T-cell (primary cell): ENCODE measurements at regions of chr9 and their contacts with region 1.

Region 1: GRCh38 chr9:88766778-88767503 is 224.3 kb upstream of the S1PR3 start:
- DNase-seq: no peak
- ATAC-seq: no peak
- H3K4me3 ChIP-seq: no peak overlapping the region
- H3K4me3 Mint-ChIP-seq: no peak overlapping the region
- H3K27ac ChIP-seq: no peak overlapping the region
- H3K27ac Mint-ChIP-seq: no peak overlapping the region
- H3K4me1 ChIP-seq: no peaks in the 10 kb centered on the region
- H3K4me1 Mint-ChIP-seq: no peaks in the 10 kb centered on the region
- H3K27me3 ChIP-seq: no peaks in the 10 kb centered on the region
- H3K27me3 Mint-ChIP-seq: peaks cover 2 to 6% of the 10 kb centered on the region in 2 donors

Region 2: GRCh38 chr9:88694625-88695024 is 72.3 kb before region 1 on chr9:
- CTCF ChIA-PET with region 1: no interaction called
- POLR2A ChIA-PET with region 1: no interaction called
- DNase-seq: no peak
- ATAC-seq: no peak
- H3K4me3 ChIP-seq: no peak overlapping the region
- H3K4me3 Mint-ChIP-seq: no peak overlapping the region
- H3K27ac ChIP-seq: no peak overlapping the region
- H3K27ac Mint-ChIP-seq: no peak overlapping the region
- H3K4me1 ChIP-seq: no peaks in the 10 kb centered on the region
- H3K4me1 Mint-ChIP-seq: no peaks in the 10 kb centered on the region
- H3K27me3 ChIP-seq: peaks cover 0 to 14% of the 10 kb centered on the region in 2 experiments
- H3K27me3 Mint-ChIP-seq: peaks cover 14 to 28% of the 10 kb centered on the region in 2 donors

Region 3: DNA sequence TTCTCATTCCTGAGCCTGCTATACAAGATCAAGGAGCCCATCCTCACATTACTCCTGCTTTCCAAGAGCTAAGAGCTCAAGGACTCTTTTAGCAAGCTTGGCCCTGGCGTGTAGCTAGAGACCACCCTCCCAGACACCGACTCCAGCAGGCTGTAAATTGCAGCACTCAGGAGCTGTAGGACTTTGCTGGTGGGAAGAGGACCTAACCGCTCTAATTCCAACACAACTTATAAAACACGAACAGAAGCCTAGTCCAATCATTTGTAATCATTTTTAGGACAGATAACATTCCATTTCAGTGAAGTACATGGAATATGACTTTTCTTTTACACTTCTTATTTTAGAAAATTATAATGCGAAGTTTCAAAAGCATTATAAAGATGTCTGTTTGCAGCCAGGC is 12.1 kb before region 1 on chr9:
- CTCF ChIA-PET with region 1: interaction called in 1 of 2 experiments, 5 read pairs
- POLR2A ChIA-PET with region 1: interaction called in 1 of 2 experiments, 10 read pairs
- DNase-seq: no peak
- ATAC-seq: no peak
- H3K4me3 ChIP-seq: no peak overlapping the region
- H3K4me3 Mint-ChIP-seq: no peak overlapping the region
- H3K27ac ChIP-seq: no peak overlapping the region
- H3K27ac Mint-ChIP-seq: no peak overlapping the region
- H3K4me1 ChIP-seq: no peaks in the 10 kb centered on the region
- H3K4me1 Mint-ChIP-seq: no peaks in the 10 kb centered on the region
- H3K27me3 ChIP-seq: peaks cover 0 to 25% of the 10 kb centered on the region in 2 experiments
- H3K27me3 Mint-ChIP-seq: peaks cover 23 to 30% of the 10 kb centered on the region in 2 donors

Region 4: DNA sequence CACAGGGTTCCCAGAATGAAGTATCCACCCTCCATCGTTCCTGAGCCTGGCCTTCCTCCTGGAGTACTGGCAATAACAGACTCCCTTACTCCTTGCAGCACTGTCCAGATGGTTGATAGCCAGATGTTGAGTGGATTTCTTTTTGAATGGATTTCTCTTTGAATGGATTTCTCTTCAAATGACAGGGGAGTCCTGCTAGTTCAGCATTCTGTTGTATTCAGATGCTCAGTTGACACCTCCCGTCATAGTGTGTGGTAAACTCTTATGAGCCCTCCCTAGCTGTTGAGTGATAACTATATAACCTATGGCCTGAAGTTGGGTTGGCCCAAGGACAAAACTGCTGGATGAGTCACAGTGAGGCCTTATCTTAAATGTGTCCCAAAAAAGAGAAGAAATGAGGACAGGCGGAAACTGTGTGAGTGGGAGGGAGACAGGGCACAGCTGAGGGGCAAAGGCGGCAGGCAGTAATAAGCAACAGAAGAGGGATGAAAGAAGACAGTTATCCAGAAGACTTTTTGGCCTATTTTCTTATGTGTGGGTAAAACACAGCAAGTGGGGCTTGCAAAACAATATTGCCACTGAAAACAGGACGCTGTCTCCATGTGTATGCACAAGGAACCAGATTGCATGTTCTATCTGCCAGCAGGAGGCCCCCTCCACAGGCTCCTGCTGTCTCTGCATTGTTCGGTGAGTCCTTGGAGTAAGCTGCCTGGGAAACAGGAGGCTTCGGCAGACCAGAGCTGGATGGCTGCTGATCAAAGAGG is 14.9 kb after region 1 on chr9:
- CTCF ChIA-PET with region 1: no interaction called
- POLR2A ChIA-PET with region 1: no interaction called
- DNase-seq: no peak
- ATAC-seq: no peak
- H3K4me3 ChIP-seq: no peak overlapping the region
- H3K4me3 Mint-ChIP-seq: no peak overlapping the region
- H3K27ac ChIP-seq: no peak overlapping the region
- H3K27ac Mint-ChIP-seq: no peak overlapping the region
- H3K4me1 ChIP-seq: peaks cover 0 to 5% of the 10 kb centered on the region in 2 experiments
- H3K4me1 Mint-ChIP-seq: peaks cover 3 to 5% (median 4%) of the 10 kb centered on the region in 3 donors
- H3K27me3 ChIP-seq: peaks cover 0 to 10% of the 10 kb centered on the region in 2 experiments
- H3K27me3 Mint-ChIP-seq: peaks cover 6 to 14% of the 10 kb centered on the region in 2 donors

Region 5: GRCh38 chr9:88835038-88835466 is 68.1 kb after region 1 on chr9:
- CTCF ChIA-PET with region 1: no interaction called
- POLR2A ChIA-PET with region 1: no interaction called
- DNase-seq: peak in 5 of 35 experiments; percentile 3 to 71 (median 18)
- ATAC-seq: peak; percentile 77 to 99 (median 92)
- H3K4me3 ChIP-seq: no peak overlapping the region
- H3K4me3 Mint-ChIP-seq: peak overlapping the region in 2 of 3 donors; percentile 34 to 54
- H3K27ac ChIP-seq: no peak overlapping the region
- H3K27ac Mint-ChIP-seq: peak overlapping the region in 1 of 2 donors; percentile 63
- H3K4me1 ChIP-seq: peaks cover 8 to 22% of the 10 kb centered on the region in 2 experiments
- H3K4me1 Mint-ChIP-seq: peaks cover 18 to 42% (median 30%) of the 10 kb centered on the region in 3 donors
- H3K27me3 ChIP-seq: peaks cover 8 to 35% of the 10 kb centered on the region in 2 experiments
- H3K27me3 Mint-ChIP-seq: peaks cover 55 to 60% of the 10 kb centered on the region in 2 donors